HEK293T (cell line): ENCODE measurements at regions of chr4 and their contacts with region 1.

Region 1: GRCh38 chr4:140359562-140360427 is 13.7 kb upstream of the SCOC start:
- DNase-seq: peak; percentile 72

Region 2: DNA sequence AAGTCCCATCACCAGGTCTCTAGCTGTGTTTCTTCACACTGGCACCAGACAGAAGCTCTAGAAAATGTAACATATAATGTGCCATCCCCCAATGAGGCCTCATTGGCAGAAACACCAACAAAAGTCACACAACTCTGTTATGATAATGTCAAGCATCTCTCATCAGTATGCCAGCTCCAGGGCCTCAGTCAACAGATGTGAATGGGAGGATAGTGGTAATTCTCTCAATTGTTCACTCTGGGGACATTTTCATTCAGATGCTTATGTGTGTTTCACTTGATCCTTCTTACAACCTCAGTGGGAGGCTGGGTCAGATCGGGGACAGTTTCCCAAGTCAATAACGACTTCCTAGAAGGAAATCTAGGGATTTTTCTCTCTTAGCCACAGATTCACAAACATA is 43.8 kb before region 1 on chr4:
- CTCF ChIA-PET with region 1: no interaction called
- POLR2A ChIA-PET with region 1: no interaction called
- DNase-seq: no peak

Region 3: GRCh38 chr4:140330311-140330900 is 29.4 kb before region 1 on chr4:
- CTCF ChIA-PET with region 1: interaction called, 10 read pairs
- POLR2A ChIA-PET with region 1: no interaction called
- DNase-seq: peak; percentile 26

Region 4: GRCh38 chr4:140343303-140343702 is 16.5 kb before region 1 on chr4:
- CTCF ChIA-PET with region 1: interaction called, 10 read pairs
- POLR2A ChIA-PET with region 1: no interaction called
- DNase-seq: no peak

Region 5: DNA sequence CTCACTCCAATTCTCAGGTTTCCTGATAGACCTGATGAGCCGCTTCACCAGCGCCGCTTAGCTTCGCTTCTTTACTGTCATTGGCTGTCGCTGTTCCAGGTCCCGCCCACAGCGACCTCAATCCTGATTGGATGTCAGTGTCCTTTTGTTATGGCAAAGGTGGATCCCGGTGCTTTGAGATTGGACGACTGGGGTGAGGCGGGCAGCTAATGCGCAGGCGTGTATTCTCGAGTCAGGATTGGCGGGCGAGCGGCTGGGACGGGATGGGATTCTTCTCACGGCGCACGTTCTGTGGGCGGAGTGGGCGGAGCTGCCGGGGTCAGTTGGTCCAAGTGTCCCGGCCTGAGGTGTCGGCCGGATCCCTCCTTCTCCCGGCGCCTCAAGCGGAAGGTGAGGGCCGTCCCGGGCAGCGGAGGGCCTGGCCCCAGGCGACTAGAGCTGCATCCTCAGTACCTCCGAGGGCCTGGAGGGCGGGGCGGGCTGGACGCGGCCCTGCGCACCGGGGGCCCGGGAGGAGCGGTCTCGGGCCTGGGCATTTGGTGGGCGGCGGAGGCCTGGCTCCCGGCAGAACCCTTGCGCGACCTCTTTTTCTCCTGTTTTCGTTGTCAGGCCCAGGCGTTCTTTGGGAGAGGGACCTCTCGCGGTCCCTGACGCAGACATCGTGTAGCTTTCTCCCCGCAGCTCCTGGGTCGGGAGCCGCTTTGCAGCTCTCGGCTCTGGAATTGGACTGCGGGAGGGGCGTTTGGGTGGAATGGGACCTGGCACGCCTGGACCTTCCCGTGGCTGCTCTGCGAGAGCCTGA is 13.7 kb after region 1 on chr4 and contains the start of gene SCOC:
- CTCF ChIA-PET with region 1: interaction called, 32 read pairs
- POLR2A ChIA-PET with region 1: interaction called, 13 read pairs
- DNase-seq: peak; percentile 97

Region 6: DNA sequence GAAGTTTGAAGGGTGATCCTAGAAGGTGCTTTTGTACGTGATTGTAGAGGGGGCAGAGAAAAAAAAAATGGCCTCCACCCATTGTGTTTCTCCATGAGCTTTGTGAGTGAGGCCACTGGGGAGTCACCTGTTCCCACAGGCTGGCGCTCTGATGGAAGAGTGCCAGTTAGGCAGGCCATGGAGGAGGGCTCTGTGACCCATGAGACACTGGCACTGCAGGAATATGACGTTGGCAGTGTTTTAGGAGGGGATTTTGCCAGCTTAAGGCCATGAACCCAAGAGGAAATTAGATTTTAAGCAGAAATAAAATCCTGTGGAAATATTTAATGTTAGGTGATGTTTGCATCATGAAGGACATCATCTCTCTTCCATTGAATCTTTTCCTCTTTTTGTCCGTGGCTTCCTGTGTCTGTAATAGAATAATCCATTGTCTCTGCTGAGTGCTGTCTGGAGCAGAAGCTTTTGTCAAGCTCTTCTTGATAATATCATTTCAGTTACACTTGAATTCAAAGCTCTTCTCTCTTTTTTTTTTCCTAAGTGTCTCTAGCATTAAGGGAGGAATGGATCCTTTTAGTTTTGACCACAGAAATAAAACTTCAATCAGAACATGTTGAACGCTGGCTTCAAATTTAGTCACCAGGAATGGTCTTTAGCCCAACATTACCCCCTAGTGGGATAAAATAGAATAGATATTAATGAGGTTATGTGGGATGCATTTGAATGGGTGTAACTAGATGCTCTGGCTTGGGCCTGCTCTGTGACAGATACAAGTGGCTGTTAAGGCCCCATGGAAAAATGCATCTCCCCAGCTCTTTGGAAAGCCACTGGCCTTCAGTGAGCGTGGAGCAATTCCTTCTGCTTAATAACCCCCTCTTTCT is 250.0 kb after region 1 on chr4:
- CTCF ChIA-PET with region 1: interaction called, 33 read pairs
- POLR2A ChIA-PET with region 1: no interaction called
- DNase-seq: peak; percentile 61

Region 7: DNA sequence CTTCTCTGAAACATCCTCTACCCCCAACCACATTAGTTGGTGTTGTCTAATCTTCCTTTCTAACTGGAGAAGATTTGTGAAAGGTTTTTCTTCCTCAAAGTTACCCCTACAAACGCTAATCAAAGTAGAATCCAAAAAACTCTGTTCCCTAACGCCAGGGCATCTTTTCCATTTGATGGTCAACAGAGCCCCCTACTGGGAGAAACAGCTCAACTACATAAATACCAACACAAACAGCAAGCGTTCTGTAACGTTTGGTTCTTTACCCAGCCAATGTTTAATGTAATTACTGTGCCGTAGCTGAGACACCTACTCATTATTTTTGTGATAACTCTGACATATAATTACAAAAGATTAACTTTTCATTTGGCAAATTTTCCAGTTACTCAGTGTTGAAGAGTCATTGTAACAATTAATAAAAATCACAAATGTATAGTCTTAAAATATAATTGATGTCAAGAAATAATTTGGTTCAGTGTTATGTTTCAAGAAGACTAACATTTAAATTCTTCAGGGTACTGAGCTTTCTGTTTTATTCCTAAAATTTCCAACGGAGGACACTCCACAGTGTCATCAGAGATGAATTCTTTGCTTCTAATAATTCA is 491.3 kb after region 1 on chr4:
- CTCF ChIA-PET with region 1: interaction called, 13 read pairs
- POLR2A ChIA-PET with region 1: no interaction called
- DNase-seq: peak; percentile 66